Astrocyte of the cerebellum (primary cell): ENCODE measurements at regions of chr17 and their contacts with region 1.

Region 1: DNA sequence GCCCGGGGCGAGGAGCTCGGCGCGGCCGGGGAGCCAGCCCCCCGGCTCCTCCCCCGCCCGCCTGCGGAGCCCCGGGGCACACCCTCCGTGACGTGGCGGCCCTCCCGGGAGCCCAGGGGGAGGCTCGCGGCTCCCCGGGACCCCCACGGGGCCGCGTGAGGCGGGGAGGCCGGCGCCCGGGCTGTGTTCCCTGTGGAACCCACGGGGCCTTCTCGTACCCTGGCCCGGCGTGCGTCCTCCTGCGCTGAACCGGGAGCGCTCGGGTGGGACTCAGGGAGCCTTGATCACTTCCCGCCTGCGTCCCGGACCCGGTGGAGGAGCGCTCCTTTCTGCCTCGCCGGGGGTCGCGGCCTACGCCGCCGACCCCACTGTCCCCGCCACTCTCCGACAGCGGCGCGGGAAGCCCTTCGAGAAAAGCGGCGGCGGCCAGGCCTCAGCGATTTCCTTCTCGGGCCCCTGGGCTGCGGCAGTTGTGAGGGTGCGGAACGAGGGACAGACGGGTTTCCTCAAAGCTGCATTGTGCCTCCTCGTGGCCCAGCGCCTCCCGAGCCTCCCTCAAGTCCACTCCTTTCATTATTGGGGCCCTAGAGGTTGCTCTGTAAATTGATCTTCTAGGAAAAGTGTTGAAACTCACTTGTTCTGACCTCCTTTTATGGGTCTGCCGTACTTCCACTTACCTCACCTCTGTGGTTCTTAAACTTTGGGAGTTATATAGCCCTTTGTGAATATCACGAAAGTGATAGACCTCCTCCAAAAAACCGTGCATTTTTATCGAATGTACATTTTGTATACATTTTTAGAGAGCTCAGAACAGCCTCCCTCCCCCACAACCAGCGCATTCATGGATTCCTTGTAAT is 597 bp downstream of the LIG3 start:
- DNase-seq: peak; percentile 59
- H3K4me3 ChIP-seq: peak overlapping the region; percentile 82
- CTCF ChIP-seq: peak; percentile 36

Region 2: GRCh38 chr17:35587074-35587971 is 606.4 kb after region 1 on chr17 and contains the start of gene AP2B1:
- in situ Hi-C with region 1: loop called (anchors 25 kb)
- DNase-seq: peak; percentile 93
- H3K4me3 ChIP-seq: peak within 1 kb of the TSS; percentile 89
- CTCF ChIP-seq: no peak